ENCODE measurements at regions of chr11 and their contacts with region 1.

Region 1: DNA sequence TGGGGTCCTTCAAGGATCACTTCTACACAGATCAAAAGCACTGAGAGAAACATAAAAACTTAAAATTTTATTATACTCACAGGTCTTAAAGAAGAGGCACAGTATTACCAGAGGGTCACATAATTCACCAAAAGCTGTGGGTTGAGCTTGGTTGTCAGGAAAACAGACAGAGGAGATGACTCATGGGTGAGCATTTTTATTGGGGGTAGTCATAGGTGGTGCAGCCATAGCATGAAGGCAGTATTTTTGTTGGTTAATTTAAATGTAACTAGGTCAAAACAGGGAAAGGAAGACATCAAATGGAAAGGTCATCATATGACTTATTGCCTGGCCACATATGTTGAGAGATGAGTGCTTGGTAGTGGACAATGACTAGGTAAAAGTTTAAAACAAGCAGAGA is 24.2 kb downstream of the OR5B17 start:
- DNase-seq: peak in 1 of 2 experiments; percentile 33
- H3K4me3 ChIP-seq: no peak overlapping the region
- H3K27ac ChIP-seq: no peak overlapping the region
- H3K4me1 ChIP-seq: peaks cover 14% of the 10 kb centered on the region
- H3K27me3 ChIP-seq: no peaks in the 10 kb centered on the region
- CTCF ChIP-seq: no peak

Region 2: DNA sequence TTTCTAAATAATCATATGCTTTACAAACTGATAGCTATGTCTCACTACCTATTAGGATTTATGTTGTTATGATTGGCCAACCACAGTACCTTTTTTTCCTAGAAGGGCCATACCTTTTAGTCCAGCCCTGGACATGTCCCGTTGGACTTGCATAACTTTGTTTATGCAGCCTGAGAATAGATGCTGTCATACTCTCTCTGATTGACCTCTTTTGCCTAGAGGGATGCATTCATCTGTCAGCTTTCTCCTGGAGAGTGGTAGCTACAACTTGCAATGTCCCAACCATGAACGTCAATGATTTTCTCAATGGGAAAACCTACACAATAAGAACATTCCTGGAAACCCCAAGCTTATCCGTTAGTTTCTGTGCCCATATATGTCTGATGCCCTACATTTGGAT is 222.3 kb before region 1 on chr11:
- CTCF ChIA-PET with region 1: no interaction called
- POLR2A ChIA-PET with region 1: no interaction called
- intact Hi-C with region 1: no loop called
- DNase-seq: no peak
- H3K4me3 ChIP-seq: no peak overlapping the region
- H3K27ac ChIP-seq: no peak overlapping the region
- H3K4me1 ChIP-seq: no peaks in the 10 kb centered on the region
- H3K27me3 ChIP-seq: no peaks in the 10 kb centered on the region
- CTCF ChIP-seq: no peak

Region 3: GRCh38 chr11:58301576-58301975 is 33.1 kb before region 1 on chr11:
- CTCF ChIA-PET with region 1: no interaction called
- POLR2A ChIA-PET with region 1: no interaction called
- intact Hi-C with region 1: no loop called
- DNase-seq: no peak
- H3K4me3 ChIP-seq: no peak overlapping the region
- H3K27ac ChIP-seq: no peak overlapping the region
- H3K4me1 ChIP-seq: no peaks in the 10 kb centered on the region
- H3K27me3 ChIP-seq: no peaks in the 10 kb centered on the region
- CTCF ChIP-seq: no peak

Region 4: GRCh38 chr11:58394195-58394594 is 59.5 kb after region 1 on chr11:
- CTCF ChIA-PET with region 1: no interaction called
- POLR2A ChIA-PET with region 1: no interaction called
- intact Hi-C with region 1: loop called (anchors 2 kb)
- DNase-seq: peak; percentile 14 to 79
- H3K4me3 ChIP-seq: no peak overlapping the region
- H3K27ac ChIP-seq: no peak overlapping the region
- H3K4me1 ChIP-seq: peaks cover 30% of the 10 kb centered on the region
- H3K27me3 ChIP-seq: no peaks in the 10 kb centered on the region
- CTCF ChIP-seq: no peak

Region 5: DNA sequence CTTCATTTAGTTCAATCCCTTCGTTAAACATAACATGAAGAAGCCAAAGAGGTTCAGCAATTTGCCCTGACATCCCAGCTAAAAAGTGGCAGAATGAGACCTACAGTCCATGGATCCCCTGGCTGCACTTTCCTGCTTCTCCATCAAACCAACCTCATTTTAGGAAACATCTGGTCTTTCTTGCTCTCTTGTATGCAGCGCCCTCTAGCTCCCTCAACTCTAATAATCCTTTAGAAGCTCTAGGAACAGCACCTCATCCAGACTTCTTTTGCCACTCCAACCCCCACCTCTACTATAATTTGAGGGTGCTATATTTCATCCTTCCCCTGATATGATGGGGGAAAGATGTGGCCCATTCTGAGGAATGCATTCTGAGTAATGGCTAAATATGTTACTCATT is 295.1 kb after region 1 on chr11:
- CTCF ChIA-PET with region 1: no interaction called
- POLR2A ChIA-PET with region 1: interaction called, 13 read pairs
- intact Hi-C with region 1: no loop called
- DNase-seq: peak in 1 of 2 experiments; percentile 40
- H3K4me3 ChIP-seq: no peak overlapping the region
- H3K27ac ChIP-seq: no peak overlapping the region
- H3K4me1 ChIP-seq: peaks cover 8% of the 10 kb centered on the region
- H3K27me3 ChIP-seq: no peaks in the 10 kb centered on the region
- CTCF ChIP-seq: peak; percentile 77

Measured in PC-9 (cell line).